ENCODE measurements at regions of chr6 and their contacts with region 1.

Region 1: GRCh38 chr6:30742316-30743098 is at the start of gene FLOT1:
- DNase-seq: peak; percentile 99
- H3K4me3 Mint-ChIP-seq: peak within 1 kb of the TSS; percentile 99
- H3K27ac Mint-ChIP-seq: peak within 1 kb of the TSS; percentile 97
- H3K4me1 Mint-ChIP-seq: peaks cover 62% of the 10 kb centered on the region
- H3K27me3 Mint-ChIP-seq: no peaks in the 10 kb centered on the region
- total RNA-seq, gene FLOT1: 226 to 231 TPM

Region 2: GRCh38 chr6:30489081-30490025 is 253.2 kb before region 1 on chr6 and contains the start of gene HLA-E:
- CTCF ChIA-PET with region 1: interaction called, 4 read pairs
- POLR2A ChIA-PET with region 1: interaction called, 3 read pairs
- intact Hi-C with region 1: loop called (anchors 5 kb)
- DNase-seq: peak; percentile 93
- H3K4me3 Mint-ChIP-seq: peak within 1 kb of the TSS; percentile 99
- H3K27ac Mint-ChIP-seq: peak within 1 kb of the TSS; percentile 99
- H3K4me1 Mint-ChIP-seq: peaks cover 41% of the 10 kb centered on the region
- H3K27me3 Mint-ChIP-seq: peaks cover 2% of the 10 kb centered on the region
- total RNA-seq, gene HLA-E: 481 to 485 TPM

Region 3: GRCh38 chr6:30500421-30501355 is 241.8 kb before region 1 on chr6:
- CTCF ChIA-PET with region 1: no interaction called
- POLR2A ChIA-PET with region 1: no interaction called
- intact Hi-C with region 1: no loop called
- DNase-seq: no peak
- H3K4me3 Mint-ChIP-seq: peak overlapping the region; percentile 64
- H3K27ac Mint-ChIP-seq: peak overlapping the region; percentile 58
- H3K4me1 Mint-ChIP-seq: peaks cover 43% of the 10 kb centered on the region
- H3K27me3 Mint-ChIP-seq: no peaks in the 10 kb centered on the region

Region 4: GRCh38 chr6:30707281-30707872 is 35.1 kb before region 1 on chr6:
- CTCF ChIA-PET with region 1: no interaction called
- POLR2A ChIA-PET with region 1: no interaction called
- intact Hi-C with region 1: no loop called
- DNase-seq: no peak
- H3K4me3 Mint-ChIP-seq: no peak overlapping the region
- H3K27ac Mint-ChIP-seq: no peak overlapping the region
- H3K4me1 Mint-ChIP-seq: peaks cover 8% of the 10 kb centered on the region
- H3K27me3 Mint-ChIP-seq: no peaks in the 10 kb centered on the region

Region 5: DNA sequence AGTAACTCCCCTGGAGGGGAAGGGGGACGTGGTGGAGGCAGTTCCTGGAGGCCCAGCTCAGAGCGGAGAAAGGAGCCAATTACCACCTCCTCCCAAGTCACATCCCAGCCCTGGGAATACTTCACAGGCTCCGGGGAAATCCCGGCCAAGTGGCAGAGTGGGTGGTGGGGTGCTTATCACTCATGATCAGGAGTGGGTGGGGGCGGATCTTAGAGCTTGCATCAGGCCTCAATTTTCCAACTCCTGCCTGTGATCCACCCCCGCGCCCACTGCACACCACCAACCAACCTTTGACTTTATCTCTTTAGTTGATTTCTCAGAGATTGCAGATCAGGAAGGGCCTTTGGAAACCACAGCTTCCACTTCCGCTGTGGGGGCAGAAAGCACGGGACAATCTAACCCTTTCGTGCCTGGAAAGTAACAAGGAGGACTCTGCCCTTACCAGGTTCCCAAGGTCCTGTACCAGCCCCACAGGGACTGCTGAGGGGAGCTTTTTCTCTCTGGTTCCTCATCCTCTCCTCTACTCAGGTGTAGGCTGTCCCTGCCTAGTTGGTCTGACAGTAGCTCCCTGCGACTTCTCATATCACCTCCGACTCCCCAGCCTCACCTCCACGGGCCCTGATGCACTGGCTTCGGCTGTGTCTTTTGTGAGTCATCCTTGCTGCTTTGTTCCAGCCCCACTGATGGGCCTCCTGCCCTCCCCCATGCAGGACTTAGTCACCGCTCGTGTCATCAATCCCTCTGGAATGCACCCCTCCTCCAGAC is 26.8 kb after region 1 on chr6:
- CTCF ChIA-PET with region 1: interaction called, 6 read pairs
- POLR2A ChIA-PET with region 1: interaction called, 47 read pairs
- intact Hi-C with region 1: loop called (anchors 1 kb)
- DNase-seq: peak; percentile 89
- H3K4me3 Mint-ChIP-seq: peak overlapping the region; percentile 52
- H3K27ac Mint-ChIP-seq: peak overlapping the region; percentile 93
- H3K4me1 Mint-ChIP-seq: peaks cover 65% of the 10 kb centered on the region
- H3K27me3 Mint-ChIP-seq: no peaks in the 10 kb centered on the region

Region 6: DNA sequence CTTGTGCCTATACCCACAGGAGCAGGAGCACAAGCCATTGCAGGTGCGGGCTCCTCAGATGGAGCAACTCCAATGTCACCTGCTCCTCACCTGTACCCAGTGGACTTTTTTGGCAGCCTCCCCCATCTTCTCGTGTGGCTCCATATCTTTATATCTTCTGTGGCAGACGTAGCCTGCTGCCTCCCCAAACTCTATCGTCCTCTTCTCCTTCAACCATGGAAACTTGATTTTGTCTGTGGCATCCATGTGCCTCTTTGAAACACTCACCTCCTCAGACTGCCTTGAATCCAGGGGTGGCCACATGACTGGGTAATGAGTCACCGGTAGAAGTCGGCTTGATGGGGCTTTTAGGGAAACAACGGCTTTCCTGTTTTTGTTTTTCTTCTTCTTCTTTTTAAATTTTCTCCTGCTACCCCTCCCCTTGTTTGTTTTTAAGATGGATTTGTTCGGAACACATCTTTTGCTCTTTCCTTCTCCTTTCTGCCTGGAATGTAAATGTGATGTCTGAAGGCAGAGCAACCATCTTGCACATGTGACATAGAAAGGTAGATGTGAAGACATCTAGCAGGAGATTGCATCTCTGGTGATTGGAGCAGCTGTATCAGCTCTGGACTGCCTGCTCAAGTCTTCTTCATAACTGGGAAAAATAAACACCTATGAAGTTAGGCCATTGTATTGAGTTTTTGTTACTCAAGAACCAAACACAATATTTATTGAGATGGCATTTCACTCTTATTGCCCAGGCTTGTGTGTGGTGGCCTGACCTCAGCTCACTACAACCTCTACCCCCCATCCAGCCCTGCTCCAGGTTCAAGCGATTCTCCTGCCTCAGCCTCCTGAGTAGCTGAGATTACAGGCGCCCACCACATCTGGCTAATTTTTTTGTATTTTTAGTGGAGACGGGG is 71.9 kb after region 1 on chr6:
- CTCF ChIA-PET with region 1: interaction called, 10 read pairs
- POLR2A ChIA-PET with region 1: interaction called, 31 read pairs
- intact Hi-C with region 1: loop called (anchors 1 kb)
- DNase-seq: peak; percentile 78
- H3K4me3 Mint-ChIP-seq: peak overlapping the region; percentile 22
- H3K27ac Mint-ChIP-seq: peak overlapping the region; percentile 91
- H3K4me1 Mint-ChIP-seq: peaks cover 94% of the 10 kb centered on the region
- H3K27me3 Mint-ChIP-seq: no peaks in the 10 kb centered on the region

Region 7: DNA sequence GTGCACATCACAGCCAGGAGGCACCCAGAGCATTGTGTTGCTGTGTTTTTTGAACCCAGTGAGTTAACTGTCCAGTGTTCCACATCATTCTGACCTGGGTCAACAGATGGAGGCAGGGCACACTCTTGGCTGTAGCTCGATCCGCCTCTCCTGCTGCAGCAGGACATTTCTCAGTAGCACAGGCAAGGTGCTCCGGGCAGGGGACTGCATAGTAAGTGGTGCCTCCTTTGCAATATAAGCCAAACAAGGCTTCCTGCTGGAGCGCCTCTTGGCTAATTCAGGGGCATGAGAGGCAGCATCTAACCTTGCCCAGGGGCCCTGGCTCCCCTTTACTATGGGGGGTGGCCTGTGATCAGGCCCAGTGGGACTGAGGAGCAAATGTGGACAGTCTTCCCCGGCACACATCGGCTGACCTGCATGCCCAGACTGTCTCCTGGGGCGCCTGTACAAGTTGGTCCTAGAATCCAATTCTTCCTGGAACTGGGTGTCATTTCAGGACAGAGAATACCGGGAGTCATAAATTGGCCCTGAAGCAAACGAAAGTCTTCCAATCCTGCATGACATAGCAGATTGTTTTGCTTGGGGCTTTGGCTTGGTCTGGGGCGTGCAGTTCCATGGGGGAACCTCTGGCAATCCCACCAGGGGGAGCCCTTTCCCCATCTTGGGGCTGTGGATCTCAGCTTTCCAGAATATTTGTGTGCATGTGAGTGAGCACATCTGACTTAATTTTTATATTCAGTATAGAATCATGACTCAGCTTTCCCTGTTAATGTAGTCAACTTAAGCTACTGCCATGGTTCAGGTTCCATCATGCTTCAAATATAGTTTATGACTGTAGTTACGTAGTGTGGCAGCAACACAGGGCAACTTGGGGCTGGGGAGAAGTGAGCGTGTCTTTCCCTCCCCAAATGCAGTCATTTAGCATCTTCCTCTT is 85.8 kb after region 1 on chr6:
- CTCF ChIA-PET with region 1: interaction called, 7 read pairs
- POLR2A ChIA-PET with region 1: interaction called, 10 read pairs
- intact Hi-C with region 1: loop called (anchors 1 kb)
- DNase-seq: peak; percentile 90
- H3K4me3 Mint-ChIP-seq: peak overlapping the region; percentile 83
- H3K27ac Mint-ChIP-seq: peak overlapping the region; percentile 96
- H3K4me1 Mint-ChIP-seq: peaks cover 65% of the 10 kb centered on the region
- H3K27me3 Mint-ChIP-seq: no peaks in the 10 kb centered on the region